Caco-2 (cell line): ENCODE measurements at regions of chr12 and their contacts with region 1.

Region 1: GRCh38 chr12:49366652-49367380 is 446 bp upstream of the SPATS2 start:
- DNase-seq: peak; percentile 93 to 100
- H3K4me3 ChIP-seq: peak overlapping the region; percentile 88
- H3K4me3 Mint-ChIP-seq: peak overlapping the region; percentile 75
- H3K27ac Mint-ChIP-seq: peak overlapping the region; percentile 38
- H3K4me1 ChIP-seq: peaks cover 17% of the 10 kb centered on the region
- H3K4me1 Mint-ChIP-seq: no peaks in the 10 kb centered on the region
- H3K27me3 ChIP-seq: no peaks in the 10 kb centered on the region
- H3K27me3 Mint-ChIP-seq: no peaks in the 10 kb centered on the region
- CTCF ChIP-seq: peak in 1 of 2 experiments; percentile 30

Region 2: DNA sequence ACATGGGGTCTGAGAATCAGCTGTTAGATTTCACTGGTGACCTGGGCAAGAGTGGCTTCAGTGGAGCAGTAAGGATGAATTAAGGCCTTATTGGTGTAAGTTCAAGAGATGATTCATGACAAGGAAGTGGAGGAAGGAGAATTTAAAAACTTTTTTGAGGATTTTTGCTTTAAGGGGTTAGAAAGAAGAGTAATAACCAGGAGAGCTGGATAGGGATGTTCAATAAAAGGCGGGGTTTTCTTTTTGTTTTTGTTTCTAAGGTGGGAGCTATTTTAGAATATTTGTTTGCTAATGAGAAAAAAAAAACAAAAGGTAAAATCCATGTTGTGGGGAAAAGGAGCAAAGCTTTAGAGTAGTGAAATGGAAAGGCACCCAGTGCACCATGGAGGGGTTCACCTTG is 220.4 kb before region 1 on chr12:
- CTCF ChIA-PET with region 1: no interaction called
- POLR2A ChIA-PET with region 1: no interaction called
- intact Hi-C with region 1: no loop called
- DNase-seq: no peak
- H3K4me3 ChIP-seq: no peak overlapping the region
- H3K4me3 Mint-ChIP-seq: no peak overlapping the region
- H3K27ac Mint-ChIP-seq: no peak overlapping the region
- H3K4me1 ChIP-seq: no peaks in the 10 kb centered on the region
- H3K4me1 Mint-ChIP-seq: no peaks in the 10 kb centered on the region
- H3K27me3 ChIP-seq: no peaks in the 10 kb centered on the region
- H3K27me3 Mint-ChIP-seq: no peaks in the 10 kb centered on the region
- CTCF ChIP-seq: no peak

Region 3: DNA sequence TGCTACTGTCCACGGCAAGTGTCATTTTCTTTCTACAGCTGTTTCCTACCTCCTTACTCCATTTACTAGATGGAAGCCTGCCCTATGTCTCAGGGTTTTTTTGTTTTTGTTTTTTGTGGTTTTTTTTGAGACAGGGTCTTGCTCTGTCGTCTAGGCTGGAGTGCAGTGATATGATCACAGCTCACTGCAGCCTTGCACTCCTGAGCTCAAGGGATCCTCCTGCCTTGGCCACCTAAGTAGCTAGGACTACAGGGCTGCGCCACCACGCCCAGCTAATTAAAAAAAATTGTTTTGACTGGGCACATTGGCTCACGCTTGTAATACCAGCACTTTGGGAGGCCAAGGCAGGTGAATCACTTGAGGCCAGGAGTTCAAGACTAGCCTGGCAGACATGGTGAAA is 192.6 kb before region 1 on chr12:
- CTCF ChIA-PET with region 1: no interaction called
- POLR2A ChIA-PET with region 1: no interaction called
- intact Hi-C with region 1: no loop called
- DNase-seq: peak in 1 of 2 experiments; percentile 7
- H3K4me3 ChIP-seq: no peak overlapping the region
- H3K4me3 Mint-ChIP-seq: no peak overlapping the region
- H3K27ac Mint-ChIP-seq: no peak overlapping the region
- H3K4me1 ChIP-seq: no peaks in the 10 kb centered on the region
- H3K4me1 Mint-ChIP-seq: no peaks in the 10 kb centered on the region
- H3K27me3 ChIP-seq: no peaks in the 10 kb centered on the region
- H3K27me3 Mint-ChIP-seq: no peaks in the 10 kb centered on the region
- CTCF ChIP-seq: no peak

Region 4: DNA sequence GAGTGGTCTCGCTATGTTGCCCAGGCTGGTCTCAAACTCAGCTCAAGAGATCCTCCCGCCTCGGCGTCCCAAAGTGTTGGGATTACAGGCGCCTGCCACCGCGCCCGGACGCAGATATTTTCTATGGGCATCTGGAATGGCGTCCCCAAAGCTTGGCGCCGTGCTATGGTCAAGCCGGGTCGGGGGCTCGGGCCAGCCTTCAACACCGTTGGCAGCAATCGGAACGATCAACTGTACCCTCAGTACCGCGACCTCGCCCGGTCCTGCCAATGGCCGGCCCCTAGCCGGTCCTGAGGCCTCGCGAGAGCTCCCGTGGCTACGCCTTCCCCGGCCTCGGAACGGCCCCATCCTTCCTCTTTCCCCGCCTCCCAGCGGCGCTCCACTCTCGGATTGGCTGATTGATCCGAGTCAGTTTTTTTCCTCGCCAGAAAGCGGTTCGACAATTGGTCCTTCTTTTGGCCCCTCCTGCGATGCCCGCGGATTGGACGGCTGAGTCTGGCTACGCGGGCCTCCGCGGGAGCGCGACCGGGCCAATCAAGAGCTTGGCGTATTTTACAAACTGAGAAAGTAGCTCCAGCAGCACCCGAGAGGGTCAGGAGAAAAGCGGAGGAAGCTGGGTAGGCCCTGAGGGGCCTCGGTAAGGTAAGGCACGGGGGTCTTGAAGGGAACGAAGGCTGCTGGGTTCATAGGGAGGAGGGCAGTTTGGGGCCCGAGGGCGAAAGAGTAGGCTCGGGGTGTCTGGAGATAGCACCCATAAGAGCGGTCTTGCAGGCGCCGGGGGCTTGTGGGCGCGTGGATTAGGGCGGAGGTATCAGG is 43.9 kb before region 1 on chr12 and contains the start of gene TROAP:
- CTCF ChIA-PET with region 1: interaction called, 9 read pairs
- POLR2A ChIA-PET with region 1: interaction called, 31 read pairs
- intact Hi-C with region 1: no loop called
- DNase-seq: peak; percentile 99 to 100
- H3K4me3 ChIP-seq: peak within 1 kb of the TSS; percentile 89
- H3K4me3 Mint-ChIP-seq: peak within 1 kb of the TSS; percentile 99
- H3K27ac Mint-ChIP-seq: peak within 1 kb of the TSS; percentile 98
- H3K4me1 ChIP-seq: peaks cover 10% of the 10 kb centered on the region; the same call in 1 of the 2 replicates
- H3K4me1 Mint-ChIP-seq: peaks cover 6% of the 10 kb centered on the region
- H3K27me3 ChIP-seq: no peaks in the 10 kb centered on the region
- H3K27me3 Mint-ChIP-seq: no peaks in the 10 kb centered on the region
- CTCF ChIP-seq: no peak
- total RNA-seq, gene TROAP: 134 and 135 TPM in 2 replicates

Region 5: GRCh38 chr12:49388682-49389386 is 22.0 kb after region 1 on chr12:
- CTCF ChIA-PET with region 1: interaction called, 3 read pairs
- POLR2A ChIA-PET with region 1: interaction called, 10 read pairs
- intact Hi-C with region 1: no loop called
- DNase-seq: no peak
- H3K4me3 ChIP-seq: no peak overlapping the region
- H3K4me3 Mint-ChIP-seq: no peak overlapping the region
- H3K27ac Mint-ChIP-seq: no peak overlapping the region
- H3K4me1 ChIP-seq: no peaks in the 10 kb centered on the region
- H3K4me1 Mint-ChIP-seq: peaks cover 11% of the 10 kb centered on the region
- H3K27me3 ChIP-seq: no peaks in the 10 kb centered on the region
- H3K27me3 Mint-ChIP-seq: no peaks in the 10 kb centered on the region
- CTCF ChIP-seq: no peak

Region 6: DNA sequence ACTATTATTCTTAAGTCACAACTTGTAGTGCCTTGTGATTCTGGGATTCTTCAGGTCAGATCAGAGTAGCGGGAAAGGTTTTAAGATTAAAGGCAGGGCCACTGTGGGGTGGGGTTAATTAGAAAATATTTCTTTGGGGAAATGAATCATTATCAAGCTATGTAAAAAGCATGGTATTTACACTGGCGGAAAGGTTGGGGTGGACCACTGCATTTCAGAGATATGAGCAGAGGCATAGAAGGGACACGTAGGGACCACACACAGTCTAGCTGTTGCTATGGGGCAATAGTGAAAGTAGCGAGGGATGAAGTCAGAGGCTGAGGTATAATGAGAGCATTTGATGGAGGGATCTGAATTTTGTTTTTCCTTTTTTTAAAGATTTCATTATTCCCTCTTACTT is 140.3 kb after region 1 on chr12:
- CTCF ChIA-PET with region 1: interaction called, 18 read pairs
- POLR2A ChIA-PET with region 1: interaction called, 4 read pairs
- intact Hi-C with region 1: no loop called
- DNase-seq: no peak
- H3K4me3 ChIP-seq: no peak overlapping the region
- H3K4me3 Mint-ChIP-seq: no peak overlapping the region
- H3K27ac Mint-ChIP-seq: no peak overlapping the region
- H3K4me1 ChIP-seq: no peaks in the 10 kb centered on the region
- H3K4me1 Mint-ChIP-seq: no peaks in the 10 kb centered on the region
- H3K27me3 ChIP-seq: no peaks in the 10 kb centered on the region
- H3K27me3 Mint-ChIP-seq: no peaks in the 10 kb centered on the region
- CTCF ChIP-seq: no peak

Region 7: DNA sequence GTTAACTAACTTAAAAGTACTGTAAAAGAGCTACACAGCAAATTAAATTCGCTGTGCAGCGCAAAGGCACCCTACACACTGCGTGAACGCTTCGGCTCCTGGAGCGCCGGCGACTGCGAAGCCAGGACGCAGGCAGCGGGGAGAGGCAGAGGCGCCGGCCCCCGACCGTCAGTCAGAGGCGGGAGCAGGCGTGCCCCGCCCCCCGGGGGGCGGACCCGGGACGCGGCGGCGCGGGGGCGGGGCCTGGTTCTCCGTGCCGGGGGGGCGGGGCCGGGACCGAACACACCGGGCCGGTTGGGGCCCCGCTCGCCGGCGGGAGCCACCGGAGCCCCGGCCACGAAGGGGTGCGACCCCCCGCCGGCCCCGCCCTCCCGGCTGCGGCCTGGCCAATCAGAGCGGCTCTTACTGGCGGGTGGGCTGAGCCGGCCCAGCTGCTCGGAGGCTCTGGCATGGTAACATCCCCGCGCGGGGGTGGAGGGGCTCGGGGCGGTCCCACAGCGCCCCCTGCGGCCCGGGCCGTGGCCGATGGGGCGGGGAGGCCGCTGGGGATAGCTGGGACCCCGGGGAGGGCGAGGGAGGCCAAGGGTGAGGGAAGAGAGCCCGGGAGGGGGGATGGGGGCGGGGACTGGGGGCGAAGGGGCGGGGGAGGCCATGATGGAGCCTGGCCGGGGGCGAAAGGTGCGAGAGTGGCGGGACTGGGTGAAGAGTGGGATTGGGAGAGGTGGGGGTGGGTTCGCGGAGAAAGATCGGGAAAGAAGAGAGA is 256.5 kb after region 1 on chr12 and contains the start of gene PRPF40B:
- CTCF ChIA-PET with region 1: interaction called, 20 read pairs
- POLR2A ChIA-PET with region 1: interaction called, 15 read pairs
- intact Hi-C with region 1: no loop called
- DNase-seq: peak; percentile 95 to 99
- H3K4me3 ChIP-seq: peak within 1 kb of the TSS; percentile 66
- H3K4me3 Mint-ChIP-seq: peak within 1 kb of the TSS; percentile 82
- H3K27ac Mint-ChIP-seq: peak within 1 kb of the TSS; percentile 77
- H3K4me1 ChIP-seq: peaks cover 32% of the 10 kb centered on the region
- H3K4me1 Mint-ChIP-seq: peaks cover 29% of the 10 kb centered on the region
- H3K27me3 ChIP-seq: no peaks in the 10 kb centered on the region
- H3K27me3 Mint-ChIP-seq: no peaks in the 10 kb centered on the region
- CTCF ChIP-seq: peak; percentile 61 to 71
- total RNA-seq, gene PRPF40B: 33.3 and 33.4 TPM in 2 replicates